ENCODE measurements at regions of chr7 and their contacts with region 1.

Region 1: GRCh38 chr7:131321646-131322045 is 6.0 kb upstream of the MKLN1 start:
- DNase-seq: no peak
- ATAC-seq: no peak
- H3K4me3 ChIP-seq: no peak overlapping the region
- H3K27ac ChIP-seq: no peak overlapping the region
- H3K4me1 ChIP-seq: peaks cover 0 to 11% (median 3%) of the 10 kb centered on the region in 9 donors
- H3K27me3 ChIP-seq: no peaks in the 10 kb centered on the region
- CTCF ChIP-seq: no peak

Region 2: DNA sequence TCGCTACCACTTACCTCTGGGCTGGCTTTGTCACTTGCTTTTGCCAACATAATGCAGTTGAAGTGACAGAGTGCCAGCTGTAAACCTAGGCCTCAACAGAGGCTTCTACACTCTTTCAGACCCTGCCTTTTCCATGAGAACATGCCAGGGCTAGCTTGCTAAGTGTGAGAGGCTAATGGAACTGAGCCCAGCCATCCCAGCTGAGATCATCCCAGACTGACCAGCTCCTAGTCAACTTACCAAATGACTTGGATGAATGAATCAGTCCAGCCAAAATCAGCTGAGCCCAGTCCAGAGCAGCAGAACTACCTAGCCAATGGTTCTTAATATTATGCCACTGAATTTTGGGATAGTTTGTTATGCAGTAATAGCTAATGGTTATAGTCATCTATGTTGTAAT is 28.6 kb before region 1 on chr7:
- intact Hi-C with region 1: loop called in 1 of 10 experiments (anchors 1 kb)
- DNase-seq: peak; percentile 33 to 49
- ATAC-seq: peak; percentile 67 to 84 (median 78)
- H3K4me3 ChIP-seq: no peak overlapping the region
- H3K27ac ChIP-seq: peak overlapping the region in 6 of 10 donors; percentile 23 to 61 (median 34)
- H3K4me1 ChIP-seq: peaks cover 0 to 34% (median 14%) of the 10 kb centered on the region in 9 donors
- H3K27me3 ChIP-seq: no peaks in the 10 kb centered on the region
- CTCF ChIP-seq: no peak